OCI-LY7 (cell line): ENCODE measurements at regions of chr14 and their contacts with region 1.

Region 1: GRCh38 chr14:60184146-60184904 is 19.1 kb upstream of the DHRS7 start:
- DNase-seq: peak; percentile 91
- H3K4me3 ChIP-seq: peak overlapping the region; percentile 65
- H3K27ac ChIP-seq: peak overlapping the region; percentile 42
- H3K4me1 ChIP-seq: peaks cover 38% of the 10 kb centered on the region
- CTCF ChIP-seq: peak; percentile 100

Region 2: DNA sequence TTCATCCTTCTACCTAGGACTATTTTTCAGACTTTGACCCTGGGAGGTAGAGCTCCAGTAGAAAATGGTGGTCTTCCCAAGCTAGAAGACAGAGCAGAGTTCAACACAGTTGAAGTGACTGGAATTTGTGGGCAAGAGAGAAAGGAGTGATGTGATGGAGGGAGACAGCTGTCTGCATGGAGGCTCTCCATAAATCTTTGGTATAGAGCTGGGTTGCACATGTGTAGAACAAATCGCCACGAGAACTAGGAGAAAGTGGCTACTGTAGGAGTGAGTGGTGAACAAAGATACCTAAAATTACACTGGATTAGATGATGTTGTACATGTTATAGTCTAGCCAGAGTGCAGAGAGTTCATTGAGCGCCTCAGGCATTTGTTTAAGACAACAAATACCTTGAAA is 733.6 kb before region 1 on chr14:
- CTCF ChIA-PET with region 1: no interaction called
- POLR2A ChIA-PET with region 1: no interaction called
- intact Hi-C with region 1: no loop called
- DNase-seq: no peak
- H3K4me3 ChIP-seq: no peak overlapping the region
- H3K27ac ChIP-seq: no peak overlapping the region
- H3K4me1 ChIP-seq: no peaks in the 10 kb centered on the region
- CTCF ChIP-seq: no peak

Region 3: DNA sequence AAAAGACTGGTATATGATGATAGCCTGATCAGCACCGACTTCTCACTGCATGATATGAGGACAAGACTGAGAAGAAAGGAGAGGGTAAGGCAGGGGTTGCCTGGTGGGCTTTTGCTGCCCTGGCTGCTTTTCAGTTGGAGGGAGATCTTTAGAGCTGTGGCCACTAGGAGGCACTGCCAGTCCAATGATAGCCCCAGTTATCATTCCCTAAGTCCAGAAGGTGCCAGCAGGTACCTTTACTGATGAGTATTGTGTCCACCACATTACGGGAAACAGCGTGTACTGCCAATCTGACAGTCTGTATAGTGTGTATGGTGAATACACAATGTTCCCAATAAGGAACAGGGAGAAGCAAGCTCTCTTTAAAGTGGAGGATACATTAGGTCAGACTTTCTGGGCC is 551.9 kb before region 1 on chr14:
- CTCF ChIA-PET with region 1: no interaction called
- POLR2A ChIA-PET with region 1: no interaction called
- intact Hi-C with region 1: loop called (anchors 1 kb)
- DNase-seq: peak; percentile 15
- H3K4me3 ChIP-seq: no peak overlapping the region
- H3K27ac ChIP-seq: no peak overlapping the region
- H3K4me1 ChIP-seq: no peaks in the 10 kb centered on the region
- CTCF ChIP-seq: peak; percentile 68

Region 4: DNA sequence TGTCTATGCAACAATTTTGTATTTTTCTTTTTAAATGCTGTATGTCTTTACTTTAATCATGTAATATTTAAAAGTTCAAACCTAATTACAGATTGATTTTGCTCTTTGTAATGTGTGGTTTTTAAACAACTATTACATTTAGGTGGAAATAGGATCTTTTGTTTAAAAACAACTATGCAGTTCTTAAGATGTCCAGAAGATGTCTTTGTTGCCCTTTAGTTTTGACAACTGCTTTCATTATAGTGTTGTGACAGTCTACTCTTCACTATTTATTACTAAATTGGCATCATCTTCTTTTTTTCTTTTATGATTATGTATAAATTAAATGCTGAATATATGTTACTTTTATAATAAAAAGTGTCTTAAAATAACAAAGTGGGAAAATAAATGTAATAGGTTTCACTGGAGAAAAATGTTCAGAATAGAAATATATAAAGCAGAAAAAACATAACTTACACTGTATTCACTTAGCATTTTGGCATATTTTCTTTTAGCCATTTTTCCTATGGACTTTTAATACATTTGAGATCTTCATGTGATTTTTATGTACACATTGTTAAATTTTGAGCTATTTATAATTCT is 119.7 kb before region 1 on chr14:
- CTCF ChIA-PET with region 1: interaction called, 8 read pairs
- POLR2A ChIA-PET with region 1: interaction called, 10 read pairs
- intact Hi-C with region 1: loop called (anchors 1 kb)
- DNase-seq: peak; percentile 59
- H3K4me3 ChIP-seq: no peak overlapping the region
- H3K27ac ChIP-seq: no peak overlapping the region
- H3K4me1 ChIP-seq: no peaks in the 10 kb centered on the region
- CTCF ChIP-seq: peak; percentile 91

Region 5: DNA sequence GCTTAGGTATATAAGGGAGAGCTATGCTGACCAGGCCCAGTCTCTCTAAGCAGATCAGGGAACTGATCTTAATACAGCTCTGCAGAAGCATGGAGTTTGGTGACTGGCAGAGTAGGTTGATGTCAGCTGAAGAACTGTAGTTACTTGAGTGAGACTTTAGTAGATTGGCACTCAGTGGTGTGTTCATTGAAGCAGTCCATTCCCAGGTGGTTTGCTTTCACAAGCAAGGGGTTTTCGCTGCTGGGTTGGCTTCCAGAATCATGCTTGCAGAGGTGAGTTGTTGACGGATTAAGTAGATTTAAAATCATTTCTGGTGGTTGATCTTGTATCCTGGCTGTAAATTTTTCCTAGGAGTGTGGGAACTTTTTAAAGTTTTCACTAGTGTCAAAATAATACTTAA is 12.6 kb before region 1 on chr14:
- CTCF ChIA-PET with region 1: no interaction called
- POLR2A ChIA-PET with region 1: interaction called, 10 read pairs
- intact Hi-C with region 1: no loop called
- DNase-seq: no peak
- H3K4me3 ChIP-seq: no peak overlapping the region
- H3K27ac ChIP-seq: no peak overlapping the region
- H3K4me1 ChIP-seq: no peaks in the 10 kb centered on the region
- CTCF ChIP-seq: no peak

Region 6: GRCh38 chr14:60331201-60332045 is 147.1 kb after region 1 on chr14:
- CTCF ChIA-PET with region 1: interaction called, 5 read pairs
- POLR2A ChIA-PET with region 1: interaction called, 10 read pairs
- intact Hi-C with region 1: loop called (anchors 1 kb)
- DNase-seq: peak; percentile 96
- H3K4me3 ChIP-seq: peak overlapping the region; percentile 60
- H3K27ac ChIP-seq: peak overlapping the region; percentile 97
- H3K4me1 ChIP-seq: peaks cover 61% of the 10 kb centered on the region
- CTCF ChIP-seq: peak; percentile 100